ENCODE measurements at regions of chr17 and their contacts with region 1.

Region 1: DNA sequence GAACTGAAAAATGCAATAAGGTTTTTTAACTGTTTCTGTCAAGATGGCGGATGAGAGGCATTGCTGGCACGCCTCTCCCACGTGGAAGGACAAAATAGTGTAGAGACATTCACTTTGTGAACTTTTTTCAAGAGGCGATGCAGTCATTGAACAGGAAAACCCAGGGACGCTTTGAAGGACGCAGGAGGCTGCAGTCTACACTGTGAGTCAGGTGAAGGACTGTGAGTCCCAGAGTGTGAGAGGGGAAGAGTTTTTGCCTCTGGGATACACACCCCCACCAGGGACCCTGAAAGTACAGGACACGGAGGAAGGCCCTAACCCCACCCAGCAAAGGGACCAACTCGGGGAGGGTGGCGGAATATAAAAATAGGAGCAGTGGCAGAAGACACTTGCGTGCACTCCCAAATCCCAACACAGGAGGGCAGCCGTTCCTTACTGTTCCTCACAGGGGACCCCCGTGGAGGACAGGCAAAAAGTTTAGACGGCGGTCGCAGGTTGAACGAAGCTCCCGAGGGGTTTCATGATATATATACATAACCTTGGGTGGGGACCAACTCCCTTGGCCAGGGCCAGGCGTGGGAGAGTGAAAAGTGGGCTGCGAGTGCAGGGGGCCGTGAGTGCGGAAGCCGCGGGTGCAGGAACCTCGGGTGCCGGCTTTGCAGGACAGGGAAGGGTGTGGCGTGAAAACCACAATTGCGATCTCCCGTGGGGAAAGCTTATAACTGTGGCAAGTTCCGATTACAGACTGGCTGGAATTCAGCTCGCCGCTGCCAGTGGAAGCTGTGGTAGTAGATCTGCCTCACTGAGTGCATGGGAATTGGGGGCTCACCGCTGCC is 82.0 kb upstream of the ALOX12 start:
- DNase-seq: no peak
- ATAC-seq: peak; percentile 64
- H3K4me3 ChIP-seq: no peak overlapping the region
- H3K27ac ChIP-seq: no peak overlapping the region
- H3K4me1 ChIP-seq: no peaks in the 10 kb centered on the region
- H3K27me3 ChIP-seq: no peaks in the 10 kb centered on the region
- CTCF ChIP-seq: peak; percentile 19 to 58 (median 35); a peak in 4 of 6 replicates
- POLR2A ChIP-seq: no peak
- RAD21 ChIP-seq: peak; percentile 46

Region 2: GRCh38 chr17:6666077-6666521 is 247.7 kb before region 1 on chr17:
- CTCF ChIA-PET with region 1: interaction called, 3 read pairs
- POLR2A ChIA-PET with region 1: no interaction called
- RAD21 ChIA-PET with region 1: no interaction called
- intact Hi-C with region 1: loop called (anchors 2 kb)
- DNase-seq: peak; percentile 81
- ATAC-seq: peak; percentile 82
- H3K4me3 ChIP-seq: no peak overlapping the region
- H3K27ac ChIP-seq: no peak overlapping the region
- H3K4me1 ChIP-seq: peaks cover 18 to 41% of the 10 kb centered on the region in 2 experiments
- H3K27me3 ChIP-seq: no peaks in the 10 kb centered on the region; the same call in 1 of the 2 replicates
- CTCF ChIP-seq: peak; percentile 94 to 95 (median 95)
- POLR2A ChIP-seq: no peak
- RAD21 ChIP-seq: peak; percentile 99

Region 3: GRCh38 chr17:6894206-6894528 is 19.7 kb before region 1 on chr17:
- CTCF ChIA-PET with region 1: interaction called, 11 read pairs
- POLR2A ChIA-PET with region 1: no interaction called
- RAD21 ChIA-PET with region 1: no interaction called
- intact Hi-C with region 1: no loop called
- DNase-seq: no peak
- ATAC-seq: peak; percentile 57; the same call in 1 of the 2 replicates
- H3K4me3 ChIP-seq: no peak overlapping the region
- H3K27ac ChIP-seq: no peak overlapping the region
- H3K4me1 ChIP-seq: no peaks in the 10 kb centered on the region
- H3K27me3 ChIP-seq: no peaks in the 10 kb centered on the region
- CTCF ChIP-seq: peak in 2 of 3 experiments; percentile 59 to 65; a peak in 4 of 6 replicates
- POLR2A ChIP-seq: no peak
- RAD21 ChIP-seq: peak; percentile 38; the same call in 1 of the 2 replicates

Region 4: GRCh38 chr17:6927290-6928126 is 13.7 kb after region 1 on chr17:
- CTCF ChIA-PET with region 1: interaction called, 15 read pairs
- POLR2A ChIA-PET with region 1: no interaction called
- RAD21 ChIA-PET with region 1: no interaction called
- intact Hi-C with region 1: no loop called
- DNase-seq: no peak
- ATAC-seq: no peak
- H3K4me3 ChIP-seq: no peak overlapping the region
- H3K27ac ChIP-seq: no peak overlapping the region
- H3K4me1 ChIP-seq: no peaks in the 10 kb centered on the region
- H3K27me3 ChIP-seq: no peaks in the 10 kb centered on the region
- CTCF ChIP-seq: no peak
- POLR2A ChIP-seq: no peak
- RAD21 ChIP-seq: no peak

Region 5: GRCh38 chr17:7004398-7005253 is 90.8 kb after region 1 on chr17:
- CTCF ChIA-PET with region 1: interaction called, 30 read pairs
- POLR2A ChIA-PET with region 1: no interaction called
- RAD21 ChIA-PET with region 1: interaction called in 1 of 2 experiments, 4 read pairs
- intact Hi-C with region 1: loop called (anchors 1 kb)
- DNase-seq: peak; percentile 56
- ATAC-seq: peak; percentile 87
- H3K4me3 ChIP-seq: no peak overlapping the region
- H3K27ac ChIP-seq: no peak overlapping the region
- H3K4me1 ChIP-seq: no peaks in the 10 kb centered on the region
- H3K27me3 ChIP-seq: no peaks in the 10 kb centered on the region
- CTCF ChIP-seq: peak; percentile 66 to 83 (median 82)
- POLR2A ChIP-seq: no peak
- RAD21 ChIP-seq: peak; percentile 91